ENCODE measurements at regions of chr14 and their contacts with region 1.

Region 1: DNA sequence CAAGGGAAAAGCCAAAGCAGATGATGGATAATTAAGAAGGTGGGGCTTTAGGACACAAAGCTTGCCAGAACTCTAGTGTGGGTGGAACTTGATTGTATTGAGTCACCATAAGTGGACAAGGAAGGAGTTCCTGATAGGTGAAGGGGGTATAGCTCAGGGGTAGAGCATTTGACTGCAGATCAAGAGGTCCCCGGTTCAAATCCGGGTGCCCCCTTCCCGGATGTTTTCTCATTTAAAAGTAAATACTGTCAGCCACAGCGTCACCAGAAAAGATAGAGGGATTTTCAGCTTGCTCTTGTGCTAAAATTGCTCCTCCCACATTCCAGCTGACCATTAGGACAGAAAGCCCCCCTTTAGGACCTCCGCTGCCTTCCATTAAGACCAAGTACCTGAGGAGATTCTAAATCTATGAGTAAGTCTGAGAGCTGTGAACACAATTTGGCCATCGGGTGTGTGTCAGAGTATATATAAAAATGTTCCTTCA is 36.6 kb downstream of the DCAF4 start:
- DNase-seq: peak; percentile 75
- H3K4me3 ChIP-seq: no peak overlapping the region
- H3K27ac ChIP-seq: no peak overlapping the region
- H3K27me3 ChIP-seq: no peaks in the 10 kb centered on the region
- CTCF ChIP-seq: no peak

Region 2: DNA sequence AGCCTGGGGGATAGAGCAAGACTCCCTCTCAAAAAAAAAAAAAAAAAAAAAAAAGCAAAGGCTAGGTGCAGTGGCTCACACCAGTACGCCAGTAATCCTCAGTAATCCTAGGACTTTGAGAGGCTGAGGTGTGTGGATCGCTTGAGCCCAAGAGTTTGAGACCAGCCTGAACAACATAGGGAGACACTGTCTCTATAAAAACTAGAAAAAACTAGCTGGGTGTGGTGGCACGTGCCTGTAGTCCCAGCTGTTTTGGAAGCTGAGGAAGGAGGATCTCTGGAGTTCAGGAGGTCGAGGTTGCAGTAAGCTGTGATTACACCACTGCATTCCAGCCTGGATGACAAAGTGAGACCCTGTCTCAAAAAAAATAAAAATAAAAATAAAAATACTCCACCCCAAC is 86.6 kb after region 1 on chr14:
- CTCF ChIA-PET with region 1: interaction called, 10 read pairs
- POLR2A ChIA-PET with region 1: no interaction called
- DNase-seq: no peak
- H3K4me3 ChIP-seq: no peak overlapping the region
- H3K27ac ChIP-seq: no peak overlapping the region
- H3K27me3 ChIP-seq: no peaks in the 10 kb centered on the region
- CTCF ChIP-seq: no peak

Measured in AG04450 (cell line).